CD4-positive, alpha-beta memory T cell (primary cell): ENCODE measurements at regions of chr14 and their contacts with region 1.

Region 1: DNA sequence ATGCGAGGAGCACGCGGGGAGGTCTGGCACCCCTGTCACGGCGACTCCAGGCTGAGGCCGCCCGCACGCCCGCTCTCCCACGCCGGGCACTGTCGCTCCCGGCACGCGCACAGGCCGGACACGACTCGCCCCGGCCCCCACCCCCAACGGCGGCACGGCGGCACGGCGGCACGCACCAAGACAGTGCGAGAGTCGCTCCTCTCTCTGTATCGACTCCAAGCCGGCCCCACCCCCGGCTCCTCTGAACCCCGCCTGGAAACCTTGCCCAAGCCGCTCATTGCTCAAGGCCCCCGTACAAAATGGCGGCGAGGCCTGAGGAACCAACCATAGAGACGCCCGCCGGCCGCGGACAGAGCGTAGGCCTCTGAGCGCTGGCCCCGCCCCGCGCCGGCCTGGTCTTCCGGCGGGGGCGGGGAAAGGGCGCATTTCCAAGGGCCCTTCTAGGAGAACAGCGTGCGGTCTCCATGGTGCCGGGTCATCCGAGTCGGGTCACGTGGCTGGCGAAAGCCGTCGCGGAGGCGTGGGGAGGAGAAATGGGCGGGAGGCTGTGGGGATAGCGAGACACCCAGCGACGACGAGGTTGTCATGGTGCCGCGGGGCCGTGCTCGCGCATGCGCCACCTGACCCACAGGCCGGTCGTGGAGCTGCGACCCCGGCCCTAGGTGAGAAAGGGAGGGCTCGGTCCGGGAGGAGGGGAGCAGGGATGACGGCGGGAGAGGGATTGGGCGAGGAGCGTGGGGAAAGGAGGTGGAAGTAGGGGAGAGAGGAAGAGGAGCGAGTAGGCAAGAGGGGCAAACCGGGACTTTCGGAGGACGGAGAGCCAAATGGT is at the start of gene CIPC:
- DNase-seq: peak; percentile 98 to 99 (median 99)
- H3K4me3 ChIP-seq: peak within 1 kb of the TSS; percentile 81 to 90
- H3K4me3 Mint-ChIP-seq: peak within 1 kb of the TSS; percentile 85 to 95 (median 91)
- H3K27ac ChIP-seq: peak within 1 kb of the TSS; percentile 95
- H3K27ac Mint-ChIP-seq: peak within 1 kb of the TSS; percentile 94 to 99 (median 98)
- H3K4me1 ChIP-seq: peaks cover 31% of the 10 kb centered on the region
- H3K4me1 Mint-ChIP-seq: peaks cover 25 to 48% (median 36%) of the 10 kb centered on the region in 4 donors
- H3K27me3 ChIP-seq: no peaks in the 10 kb centered on the region
- H3K27me3 Mint-ChIP-seq: no peaks in the 10 kb centered on the region
- total RNA-seq, gene CIPC: 18.6 to 21.5 TPM

Region 2: GRCh38 chr14:76151398-76152339 is 946.2 kb before region 1 on chr14 and contains the start of gene GPATCH2L:
- CTCF ChIA-PET with region 1: no interaction called
- POLR2A ChIA-PET with region 1: no interaction called
- intact Hi-C with region 1: loop called (anchors 5 kb)
- DNase-seq: peak; percentile 94 to 97 (median 96)
- H3K4me3 ChIP-seq: peak within 1 kb of the TSS; percentile 85 to 88
- H3K4me3 Mint-ChIP-seq: peak within 1 kb of the TSS; percentile 92 to 99 (median 96)
- H3K27ac ChIP-seq: peak within 1 kb of the TSS; percentile 94
- H3K27ac Mint-ChIP-seq: peak within 1 kb of the TSS; percentile 93 to 99 (median 97)
- H3K4me1 ChIP-seq: peaks cover 51% of the 10 kb centered on the region
- H3K4me1 Mint-ChIP-seq: peaks cover 37 to 59% (median 49%) of the 10 kb centered on the region in 4 donors
- H3K27me3 ChIP-seq: no peaks in the 10 kb centered on the region
- H3K27me3 Mint-ChIP-seq: no peaks in the 10 kb centered on the region
- total RNA-seq, gene GPATCH2L: 66.0 to 70.1 TPM

Region 3: GRCh38 chr14:76876076-76876475 is 221.8 kb before region 1 on chr14:
- CTCF ChIA-PET with region 1: interaction called, 186 read pairs
- POLR2A ChIA-PET with region 1: no interaction called
- intact Hi-C with region 1: loop called (anchors 1 kb)
- DNase-seq: peak in 4 of 5 donors; percentile 41 to 50 (median 44)
- H3K4me3 ChIP-seq: no peak overlapping the region
- H3K4me3 Mint-ChIP-seq: no peak overlapping the region
- H3K27ac ChIP-seq: no peak overlapping the region
- H3K27ac Mint-ChIP-seq: peak overlapping the region in 2 of 7 donors; percentile 10 to 31
- H3K4me1 ChIP-seq: no peaks in the 10 kb centered on the region
- H3K4me1 Mint-ChIP-seq: no peaks in the 10 kb centered on the region
- H3K27me3 ChIP-seq: no peaks in the 10 kb centered on the region
- H3K27me3 Mint-ChIP-seq: peaks cover 0 to 3% of the 10 kb centered on the region in 2 donors

Region 4: DNA sequence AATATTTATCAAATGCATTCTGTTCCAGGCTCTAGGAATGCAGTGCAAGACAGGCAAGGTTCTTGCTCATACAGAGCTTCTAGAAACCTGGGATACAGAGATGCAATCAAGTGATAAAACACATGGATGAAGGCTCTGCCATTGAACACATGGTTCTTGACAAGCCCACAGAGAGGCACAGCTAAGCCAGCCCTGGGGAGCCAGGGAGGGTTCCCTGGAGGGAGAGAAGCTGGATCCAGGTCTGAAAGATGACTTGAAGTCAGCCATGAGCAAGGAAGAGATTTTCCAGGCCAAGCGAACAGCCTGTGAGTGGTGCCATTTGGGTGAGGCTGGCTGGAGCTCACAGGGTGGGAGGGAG is 135.6 kb before region 1 on chr14:
- CTCF ChIA-PET with region 1: no interaction called
- POLR2A ChIA-PET with region 1: interaction called, 5 read pairs
- intact Hi-C with region 1: loop called (anchors 1 kb)
- DNase-seq: no peak
- H3K4me3 ChIP-seq: peak overlapping the region; percentile 48 to 61
- H3K4me3 Mint-ChIP-seq: peak overlapping the region; percentile 73 to 93 (median 86)
- H3K27ac ChIP-seq: peak overlapping the region; percentile 81
- H3K27ac Mint-ChIP-seq: peak overlapping the region; percentile 87 to 100 (median 97)
- H3K4me1 ChIP-seq: peaks cover 78% of the 10 kb centered on the region
- H3K4me1 Mint-ChIP-seq: peaks cover 50 to 79% (median 63%) of the 10 kb centered on the region in 4 donors
- H3K27me3 ChIP-seq: no peaks in the 10 kb centered on the region
- H3K27me3 Mint-ChIP-seq: no peaks in the 10 kb centered on the region

Region 5: DNA sequence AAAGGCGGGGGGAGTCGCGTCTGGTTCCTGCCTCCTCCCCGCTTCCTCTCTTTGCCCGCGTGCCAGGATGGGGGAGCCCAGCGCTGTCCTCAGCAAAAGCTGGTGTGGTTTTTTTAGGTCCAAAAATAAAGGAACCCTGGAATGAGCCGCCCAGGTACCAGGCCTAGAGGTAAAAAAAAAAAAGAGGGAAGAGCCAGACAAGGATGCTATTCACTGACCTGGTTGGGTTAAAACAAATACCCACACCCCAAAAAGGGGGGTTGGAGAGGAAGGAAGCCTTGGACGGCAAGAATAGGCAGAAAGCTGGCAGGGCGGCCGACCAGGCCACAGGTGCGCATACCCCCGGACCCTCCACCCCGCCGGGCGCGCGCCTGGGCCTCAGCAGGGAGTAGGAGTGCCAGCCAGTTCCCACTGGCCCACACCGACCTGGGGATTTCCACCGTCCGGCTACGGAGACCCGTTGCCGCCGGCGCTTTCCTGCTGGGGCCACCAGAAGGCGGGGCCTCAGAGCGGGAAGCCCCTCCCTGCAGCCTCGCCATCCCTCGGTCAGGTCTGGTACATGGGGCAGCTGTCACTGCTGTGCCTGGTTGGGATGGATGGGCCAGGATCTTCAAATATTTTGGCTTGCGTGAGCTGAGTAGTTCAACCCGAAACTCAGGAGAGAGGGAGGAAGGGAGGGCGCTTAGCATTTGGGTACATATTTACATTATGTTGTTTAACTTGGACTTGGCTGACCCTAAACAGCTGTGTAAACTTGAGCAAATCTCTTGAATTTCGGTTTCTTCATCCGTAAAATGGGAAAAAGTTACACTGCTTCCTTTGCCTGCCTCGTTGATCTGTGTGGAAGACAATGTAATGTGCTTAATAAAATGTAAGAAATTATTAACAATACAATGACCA is 64.0 kb before region 1 on chr14:
- CTCF ChIA-PET with region 1: no interaction called
- POLR2A ChIA-PET with region 1: no interaction called
- intact Hi-C with region 1: no loop called
- DNase-seq: peak; percentile 63 to 90 (median 72)
- H3K4me3 ChIP-seq: peak overlapping the region; percentile 71 to 84
- H3K4me3 Mint-ChIP-seq: peak overlapping the region; percentile 91 to 94 (median 92)
- H3K27ac ChIP-seq: peak overlapping the region; percentile 98
- H3K27ac Mint-ChIP-seq: peak overlapping the region; percentile 94 to 99 (median 98)
- H3K4me1 ChIP-seq: peaks cover 93% of the 10 kb centered on the region
- H3K4me1 Mint-ChIP-seq: peaks cover 53 to 87% (median 70%) of the 10 kb centered on the region in 4 donors
- H3K27me3 ChIP-seq: no peaks in the 10 kb centered on the region
- H3K27me3 Mint-ChIP-seq: no peaks in the 10 kb centered on the region

Region 6: GRCh38 chr14:77067632-77068514 is 30.0 kb before region 1 on chr14:
- CTCF ChIA-PET with region 1: interaction called, 71 read pairs
- POLR2A ChIA-PET with region 1: interaction called, 3 read pairs
- intact Hi-C with region 1: loop called (anchors 1 kb)
- DNase-seq: peak in 4 of 5 donors; percentile 45 to 63 (median 58)
- H3K4me3 ChIP-seq: no peak overlapping the region
- H3K4me3 Mint-ChIP-seq: no peak overlapping the region
- H3K27ac ChIP-seq: no peak overlapping the region
- H3K27ac Mint-ChIP-seq: no peak overlapping the region
- H3K4me1 ChIP-seq: no peaks in the 10 kb centered on the region
- H3K4me1 Mint-ChIP-seq: peaks cover 0 to 3% (median under 1%) of the 10 kb centered on the region in 4 donors
- H3K27me3 ChIP-seq: no peaks in the 10 kb centered on the region
- H3K27me3 Mint-ChIP-seq: peaks cover 0 to 4% of the 10 kb centered on the region in 2 donors

Region 7: DNA sequence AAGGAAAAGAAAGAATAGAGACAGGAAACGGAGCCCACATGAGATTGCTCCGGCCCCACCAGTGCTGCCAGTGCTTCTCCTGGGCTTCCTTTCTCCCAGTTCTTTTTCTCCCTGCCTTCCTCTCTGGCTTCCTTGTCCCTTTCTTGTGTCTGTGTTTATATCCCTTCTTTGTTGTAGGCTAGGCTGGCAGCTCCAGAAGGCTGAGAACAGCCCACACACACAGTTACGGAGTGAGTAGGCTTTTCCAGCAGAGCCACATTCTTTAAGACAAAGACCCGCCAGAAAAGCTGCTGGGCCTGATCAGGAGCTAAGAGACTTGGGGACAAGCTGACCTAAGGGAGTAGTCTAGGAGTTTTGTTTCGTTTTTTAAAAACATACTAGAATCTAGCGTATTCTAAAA is 13.1 kb after region 1 on chr14:
- CTCF ChIA-PET with region 1: interaction called, 271 read pairs
- POLR2A ChIA-PET with region 1: interaction called, 154 read pairs
- intact Hi-C with region 1: no loop called
- DNase-seq: no peak
- H3K4me3 ChIP-seq: no peak overlapping the region
- H3K4me3 Mint-ChIP-seq: no peak overlapping the region
- H3K27ac ChIP-seq: no peak overlapping the region
- H3K27ac Mint-ChIP-seq: peak overlapping the region in 1 of 7 donors; percentile 9
- H3K4me1 ChIP-seq: no peaks in the 10 kb centered on the region
- H3K4me1 Mint-ChIP-seq: peaks cover 2 to 7% (median 5%) of the 10 kb centered on the region in 4 donors
- H3K27me3 ChIP-seq: no peaks in the 10 kb centered on the region
- H3K27me3 Mint-ChIP-seq: no peaks in the 10 kb centered on the region

Region 8: DNA sequence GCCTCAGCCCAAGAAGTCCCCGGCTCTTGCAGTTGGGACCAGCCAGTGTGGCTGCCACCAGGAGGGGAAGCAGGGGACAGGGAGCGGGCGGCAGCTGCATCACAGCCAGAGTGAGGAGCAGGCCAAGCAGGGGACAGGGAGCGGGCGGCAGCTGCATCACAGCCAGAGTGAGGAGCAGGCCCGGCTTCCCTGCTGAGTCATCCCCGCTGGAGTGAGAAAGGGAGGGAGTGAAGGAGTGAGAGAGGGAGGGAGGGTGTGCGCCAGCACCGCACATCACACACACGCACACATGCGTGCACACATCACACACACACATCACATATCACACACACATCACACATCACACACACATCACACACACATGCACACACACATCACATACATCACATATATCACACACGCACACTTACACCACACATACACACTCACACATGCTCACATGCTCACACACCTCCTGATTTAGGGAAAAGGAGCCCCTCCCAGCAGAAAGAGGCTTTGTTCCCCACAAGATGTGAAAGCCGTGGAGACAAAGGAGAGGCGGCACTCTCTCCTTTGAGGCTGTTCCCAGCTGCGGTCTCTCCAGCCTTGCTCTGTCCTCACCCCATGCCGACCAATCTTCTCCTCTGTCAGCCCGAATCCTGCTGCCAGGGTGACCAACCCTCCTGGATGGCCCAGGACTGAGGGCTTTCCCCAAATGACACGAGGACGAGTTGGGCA is 60.4 kb after region 1 on chr14:
- CTCF ChIA-PET with region 1: no interaction called
- POLR2A ChIA-PET with region 1: no interaction called
- intact Hi-C with region 1: no loop called
- DNase-seq: no peak
- H3K4me3 ChIP-seq: no peak overlapping the region
- H3K4me3 Mint-ChIP-seq: no peak overlapping the region
- H3K27ac ChIP-seq: no peak overlapping the region
- H3K27ac Mint-ChIP-seq: no peak overlapping the region
- H3K4me1 ChIP-seq: no peaks in the 10 kb centered on the region
- H3K4me1 Mint-ChIP-seq: peaks cover 0 to 4% (median 0%) of the 10 kb centered on the region in 4 donors
- H3K27me3 ChIP-seq: no peaks in the 10 kb centered on the region
- H3K27me3 Mint-ChIP-seq: peaks cover 24 to 44% of the 10 kb centered on the region in 2 donors

Region 9: GRCh38 chr14:77320238-77320935 is 222.5 kb after region 1 on chr14 and contains the start of gene POMT2:
- CTCF ChIA-PET with region 1: interaction called, 10 read pairs
- POLR2A ChIA-PET with region 1: interaction called, 10 read pairs
- intact Hi-C with region 1: loop called (anchors 1 kb)
- DNase-seq: peak; percentile 90 to 93 (median 91)
- H3K4me3 ChIP-seq: peak within 1 kb of the TSS; percentile 83 to 90
- H3K4me3 Mint-ChIP-seq: peak within 1 kb of the TSS; percentile 96 to 100 (median 99)
- H3K27ac ChIP-seq: peak within 1 kb of the TSS; percentile 93
- H3K27ac Mint-ChIP-seq: peak within 1 kb of the TSS; percentile 99 to 100 (median 99)
- H3K4me1 ChIP-seq: peaks cover 12% of the 10 kb centered on the region
- H3K4me1 Mint-ChIP-seq: peaks cover 8 to 27% (median 14%) of the 10 kb centered on the region in 4 donors
- H3K27me3 ChIP-seq: no peaks in the 10 kb centered on the region
- H3K27me3 Mint-ChIP-seq: no peaks in the 10 kb centered on the region
- total RNA-seq, gene POMT2: 13.2 to 15.2 TPM